OCI-LY7 (cell line): ENCODE measurements at regions of chr17 and their contacts with region 1.

Region 1: GRCh38 chr17:50904521-50905459 is 38.6 kb upstream of the TOB1 start:
- DNase-seq: peak; percentile 23
- H3K4me3 ChIP-seq: peak overlapping the region; percentile 33
- H3K27ac ChIP-seq: peak overlapping the region; percentile 57
- H3K4me1 ChIP-seq: peaks cover 39% of the 10 kb centered on the region
- CTCF ChIP-seq: no peak

Region 2: DNA sequence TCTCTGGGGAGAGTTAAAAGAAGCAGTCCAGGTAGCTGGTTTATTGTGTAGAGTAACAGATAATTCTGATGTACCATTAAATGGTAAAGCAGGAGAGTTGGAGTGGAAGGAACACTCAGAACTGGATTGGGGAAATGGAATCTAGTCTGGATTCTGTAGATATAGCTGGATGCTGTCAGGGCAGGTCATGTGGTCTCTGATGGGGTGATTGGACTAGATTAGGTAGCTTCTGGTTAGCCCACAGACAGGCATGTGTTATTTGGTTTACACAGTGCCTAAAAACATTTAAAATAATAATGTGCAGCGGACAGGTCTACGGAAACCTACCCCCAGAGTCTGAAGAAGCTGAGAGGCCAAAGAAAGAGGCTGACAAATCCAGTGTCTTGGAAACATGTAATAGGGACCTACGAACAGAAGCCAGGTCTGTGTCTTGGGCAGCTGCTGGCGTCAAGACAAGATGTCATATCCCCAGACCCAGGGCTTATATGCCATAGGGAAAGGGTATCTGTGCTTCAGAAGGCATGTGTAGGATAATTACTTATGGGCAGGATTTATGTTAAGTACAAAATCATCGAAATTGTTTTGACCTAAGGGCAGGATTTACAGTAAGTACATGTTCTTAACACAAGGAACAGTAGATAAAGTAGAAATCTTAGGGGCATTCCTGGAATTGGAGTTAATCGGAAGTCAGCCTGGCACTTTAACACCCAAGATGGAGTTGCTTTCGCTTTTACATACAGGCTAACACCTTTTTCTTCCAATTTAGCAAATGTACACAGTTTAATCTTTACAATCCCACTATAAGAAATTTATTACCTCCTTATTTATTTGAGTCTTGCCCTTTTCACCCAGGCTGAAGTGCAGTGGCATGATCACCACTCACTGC is 173.0 kb before region 1 on chr17:
- CTCF ChIA-PET with region 1: interaction called, 11 read pairs
- POLR2A ChIA-PET with region 1: no interaction called
- intact Hi-C with region 1: no loop called
- DNase-seq: no peak
- H3K4me3 ChIP-seq: no peak overlapping the region
- H3K27ac ChIP-seq: no peak overlapping the region
- H3K4me1 ChIP-seq: peaks cover 25% of the 10 kb centered on the region
- CTCF ChIP-seq: no peak

Region 3: GRCh38 chr17:50931144-50931908 is 26.5 kb after region 1 on chr17:
- CTCF ChIA-PET with region 1: no interaction called
- POLR2A ChIA-PET with region 1: interaction called, 12 read pairs
- intact Hi-C with region 1: loop called (anchors 2 kb)
- DNase-seq: peak; percentile 74
- H3K4me3 ChIP-seq: peak overlapping the region; percentile 57
- H3K27ac ChIP-seq: peak overlapping the region; percentile 56
- H3K4me1 ChIP-seq: peaks cover 29% of the 10 kb centered on the region
- CTCF ChIP-seq: no peak

Region 4: GRCh38 chr17:50944054-50944901 is 39.5 kb after region 1 on chr17:
- CTCF ChIA-PET with region 1: no interaction called
- POLR2A ChIA-PET with region 1: interaction called, 8 read pairs
- intact Hi-C with region 1: loop called (anchors 5 kb)
- DNase-seq: peak; percentile 41
- H3K4me3 ChIP-seq: peak overlapping the region; percentile 17
- H3K27ac ChIP-seq: no peak overlapping the region
- H3K4me1 ChIP-seq: peaks cover 14% of the 10 kb centered on the region
- CTCF ChIP-seq: no peak

Region 5: DNA sequence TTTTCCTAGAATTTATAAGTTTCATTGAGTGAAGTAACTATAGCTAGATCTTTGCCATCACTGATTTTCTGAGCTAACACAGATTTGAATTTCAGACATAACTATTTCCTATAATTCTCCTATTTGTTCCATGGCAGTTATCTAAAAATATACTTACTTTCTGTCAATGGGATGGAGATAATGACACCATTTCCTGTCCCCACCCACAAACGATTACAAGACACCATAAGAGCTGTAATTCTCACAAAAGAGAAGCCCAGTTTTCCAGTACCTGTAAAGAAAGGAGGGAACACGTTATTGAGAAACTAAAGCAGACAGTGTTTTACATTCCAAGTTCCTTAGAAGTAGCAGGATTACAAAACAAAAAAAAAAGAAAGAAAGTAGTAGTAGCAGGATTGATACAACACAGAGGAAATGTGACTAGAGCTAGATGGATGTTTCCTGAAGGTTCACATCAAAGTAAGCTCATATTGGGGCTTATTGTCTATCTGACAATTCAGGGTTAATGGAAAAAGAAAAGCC is 72.2 kb after region 1 on chr17:
- CTCF ChIA-PET with region 1: no interaction called
- POLR2A ChIA-PET with region 1: no interaction called
- intact Hi-C with region 1: no loop called
- DNase-seq: no peak
- H3K4me3 ChIP-seq: no peak overlapping the region
- H3K27ac ChIP-seq: no peak overlapping the region
- H3K4me1 ChIP-seq: peaks cover 5% of the 10 kb centered on the region
- CTCF ChIP-seq: no peak

Region 6: DNA sequence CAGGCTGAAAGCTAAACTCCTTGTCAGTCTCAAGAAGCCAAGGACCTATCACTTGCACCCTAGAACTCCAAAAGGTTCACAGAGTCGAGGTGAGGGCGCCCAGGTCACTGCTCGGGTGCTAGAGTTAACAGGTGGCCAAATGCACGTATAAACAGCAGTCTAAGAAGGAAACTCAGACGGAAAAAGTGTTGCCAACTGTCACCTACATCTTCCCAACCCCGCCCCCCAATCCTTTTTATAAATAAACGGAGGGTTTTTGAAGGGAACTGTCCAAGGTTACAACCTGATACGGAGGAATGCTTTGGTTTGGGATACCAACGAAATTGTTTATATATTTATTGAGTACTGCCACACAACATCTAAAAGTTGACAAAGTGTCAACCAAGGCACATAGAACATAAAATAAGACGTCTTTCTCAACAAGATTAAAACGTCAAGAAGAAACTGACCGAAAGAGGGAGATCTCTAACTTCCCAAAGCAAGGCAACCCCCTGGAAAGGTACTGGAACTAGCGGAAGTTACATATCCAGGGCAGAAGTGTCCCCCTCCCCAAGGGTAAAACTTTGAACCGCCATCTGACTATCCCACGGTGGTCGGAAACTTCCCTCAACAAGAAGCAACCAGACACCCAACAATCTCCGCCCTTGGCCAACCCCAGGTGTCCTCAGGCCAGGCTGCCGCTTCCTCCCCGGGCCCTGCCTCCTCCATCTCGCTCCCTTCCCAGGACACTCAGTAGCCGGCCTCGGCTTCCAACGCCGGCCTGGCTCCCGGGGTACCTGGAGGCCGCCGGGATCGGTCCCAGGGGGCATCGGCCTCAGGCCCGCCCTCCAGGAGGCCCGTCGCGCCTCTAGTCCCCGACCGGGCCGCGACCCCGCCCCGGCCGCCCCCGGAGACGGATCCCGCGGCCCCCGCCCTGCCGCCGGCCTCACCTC is 214.9 kb after region 1 on chr17:
- CTCF ChIA-PET with region 1: no interaction called
- POLR2A ChIA-PET with region 1: no interaction called
- intact Hi-C with region 1: no loop called
- DNase-seq: peak; percentile 75
- H3K4me3 ChIP-seq: peak overlapping the region; percentile 100
- H3K27ac ChIP-seq: peak overlapping the region; percentile 87
- H3K4me1 ChIP-seq: peaks cover 38% of the 10 kb centered on the region
- CTCF ChIP-seq: no peak